PC-9 (cell line): ENCODE measurements at regions of chrX and their contacts with region 1.

Region 1: GRCh38 chrX:64229145-64229544 is 1.3 kb downstream of the ASB12 start:
- DNase-seq: no peak
- H3K4me3 ChIP-seq: no peak overlapping the region
- H3K27ac ChIP-seq: no peak overlapping the region
- H3K4me1 ChIP-seq: no peaks in the 10 kb centered on the region
- H3K27me3 ChIP-seq: no peaks in the 10 kb centered on the region
- CTCF ChIP-seq: no peak

Region 2: DNA sequence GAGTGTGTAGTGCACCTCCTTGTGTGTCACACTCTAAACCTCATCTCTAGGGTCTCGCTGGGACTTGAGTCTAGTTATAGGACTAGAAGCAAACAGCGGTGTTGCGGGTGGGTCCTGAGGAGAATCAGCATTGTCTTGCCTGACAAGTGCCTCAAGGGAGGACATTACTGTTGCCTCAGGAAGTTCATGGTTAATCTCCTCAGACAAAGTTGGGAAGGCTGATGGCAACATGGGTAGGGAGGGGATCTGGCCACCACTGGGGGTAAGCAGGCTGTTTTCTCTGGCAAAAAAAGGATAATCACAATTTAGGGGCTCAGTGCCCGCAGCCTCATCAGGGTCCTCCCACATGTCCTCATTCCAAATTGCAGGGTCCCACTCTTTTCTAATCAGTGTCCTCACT is 11.1 kb before region 1 on chrX:
- CTCF ChIA-PET with region 1: interaction called, 14 read pairs
- POLR2A ChIA-PET with region 1: no interaction called
- intact Hi-C with region 1: no loop called
- DNase-seq: no peak
- H3K4me3 ChIP-seq: no peak overlapping the region
- H3K27ac ChIP-seq: no peak overlapping the region
- H3K4me1 ChIP-seq: no peaks in the 10 kb centered on the region
- H3K27me3 ChIP-seq: no peaks in the 10 kb centered on the region
- CTCF ChIP-seq: no peak

Region 3: DNA sequence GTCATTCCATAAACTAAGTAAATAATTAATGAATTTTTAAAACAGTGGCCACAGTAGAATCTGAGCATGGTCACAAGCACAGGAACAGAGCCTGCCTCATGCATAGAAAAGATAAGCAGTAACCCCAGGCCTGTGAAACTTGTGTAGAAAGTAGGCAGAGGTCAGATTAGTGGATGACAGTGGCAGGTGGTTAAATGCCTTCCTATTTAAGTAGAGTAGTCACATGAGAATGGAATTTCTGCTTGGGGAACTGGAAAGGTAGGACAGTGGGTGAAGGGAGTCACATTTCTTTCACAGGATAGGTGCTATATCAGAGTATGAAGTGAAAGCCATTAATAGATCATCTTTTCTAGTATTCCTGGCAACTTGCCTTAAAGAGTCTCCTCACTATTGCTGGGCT is 36.1 kb after region 1 on chrX:
- CTCF ChIA-PET with region 1: no interaction called
- POLR2A ChIA-PET with region 1: no interaction called
- intact Hi-C with region 1: no loop called
- DNase-seq: peak in 1 of 2 experiments; percentile 39
- H3K4me3 ChIP-seq: no peak overlapping the region
- H3K27ac ChIP-seq: no peak overlapping the region
- H3K4me1 ChIP-seq: no peaks in the 10 kb centered on the region
- H3K27me3 ChIP-seq: no peaks in the 10 kb centered on the region
- CTCF ChIP-seq: no peak